MCF 10A (cell line): ENCODE measurements at regions of chr16 and their contacts with region 1.

Region 1: DNA sequence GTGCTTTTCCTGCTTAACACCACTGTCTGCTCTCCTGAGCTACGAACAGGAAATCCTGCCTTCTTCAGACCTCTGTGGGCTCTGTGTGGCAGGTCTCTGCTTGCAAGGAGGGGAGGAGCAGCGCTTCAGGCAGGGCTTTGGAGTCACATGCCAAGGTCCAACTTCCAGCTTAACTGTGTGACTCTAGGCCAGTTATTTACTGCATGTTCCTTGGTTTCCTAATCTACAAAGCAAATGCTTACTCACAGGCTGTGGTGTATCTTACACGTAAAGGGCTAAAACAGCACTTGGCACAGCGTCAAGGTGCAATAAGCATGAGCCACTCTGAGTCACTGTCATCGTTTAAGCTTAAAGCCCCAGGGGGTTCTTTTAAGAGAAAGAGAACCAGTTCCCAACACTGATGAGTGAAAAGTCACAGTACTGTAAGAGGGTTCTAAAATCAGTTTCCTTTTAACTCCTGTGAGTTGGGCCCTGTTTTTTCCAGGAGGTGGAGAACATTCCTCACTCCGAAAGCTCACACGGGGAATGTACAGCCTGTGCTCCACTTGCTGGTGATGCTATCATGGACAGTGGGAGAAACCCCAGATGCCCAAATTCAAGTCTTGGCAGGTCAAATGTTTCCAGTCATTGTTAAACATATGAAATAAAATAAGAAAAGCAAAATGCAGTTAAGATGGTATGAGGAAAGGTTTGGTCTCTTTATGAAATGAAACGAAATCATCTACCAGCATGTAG is 54.1 kb upstream of the BCAR1 start:
- DNase-seq: peak; percentile 100
- H3K4me3 Mint-ChIP-seq: peak overlapping the region; percentile 65
- H3K27ac Mint-ChIP-seq: peak overlapping the region; percentile 99
- H3K4me1 Mint-ChIP-seq: peaks cover 45% of the 10 kb centered on the region
- H3K27me3 Mint-ChIP-seq: no peaks in the 10 kb centered on the region
- CTCF ChIP-seq: no peak

Region 2: DNA sequence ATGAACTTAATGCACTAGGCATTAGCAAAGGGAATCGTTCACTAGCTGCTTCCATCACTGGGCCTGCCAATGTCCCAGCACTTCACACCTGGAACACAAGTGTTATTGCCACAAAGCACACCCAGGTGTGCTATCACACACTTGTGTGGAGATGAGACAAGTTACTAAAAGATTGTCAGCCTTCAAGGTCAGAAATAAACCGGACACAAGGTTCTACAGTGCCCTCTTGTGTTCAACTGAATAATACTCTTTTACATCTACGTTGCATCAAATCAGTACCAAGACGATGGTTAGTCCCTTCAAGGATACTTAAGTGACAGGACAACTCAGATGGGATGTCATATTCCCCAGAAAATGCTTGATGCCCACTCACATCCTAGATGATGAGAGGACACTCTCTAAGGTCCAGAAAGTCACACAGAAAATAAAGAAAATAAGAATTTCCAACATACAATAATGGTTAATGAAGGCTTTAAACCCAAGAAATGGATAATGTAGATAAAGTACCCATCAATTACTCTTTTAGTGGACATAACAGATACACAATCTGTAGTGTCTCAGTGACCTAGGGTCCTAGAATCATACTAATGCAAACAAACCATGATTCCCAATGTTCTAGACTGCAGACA is 682.2 kb before region 1 on chr16:
- CTCF ChIA-PET with region 1: no interaction called
- POLR2A ChIA-PET with region 1: no interaction called
- intact Hi-C with region 1: no loop called
- DNase-seq: peak; percentile 60
- H3K4me3 Mint-ChIP-seq: no peak overlapping the region
- H3K27ac Mint-ChIP-seq: no peak overlapping the region
- H3K4me1 Mint-ChIP-seq: peaks cover 4% of the 10 kb centered on the region
- H3K27me3 Mint-ChIP-seq: no peaks in the 10 kb centered on the region
- CTCF ChIP-seq: peak; percentile 65

Region 3: GRCh38 chr16:75096663-75097119 is 208.8 kb before region 1 on chr16:
- CTCF ChIA-PET with region 1: no interaction called
- POLR2A ChIA-PET with region 1: no interaction called
- intact Hi-C with region 1: no loop called
- DNase-seq: no peak
- H3K4me3 Mint-ChIP-seq: no peak overlapping the region
- H3K27ac Mint-ChIP-seq: no peak overlapping the region
- H3K4me1 Mint-ChIP-seq: no peaks in the 10 kb centered on the region
- H3K27me3 Mint-ChIP-seq: no peaks in the 10 kb centered on the region
- CTCF ChIP-seq: peak; percentile 17

Region 4: DNA sequence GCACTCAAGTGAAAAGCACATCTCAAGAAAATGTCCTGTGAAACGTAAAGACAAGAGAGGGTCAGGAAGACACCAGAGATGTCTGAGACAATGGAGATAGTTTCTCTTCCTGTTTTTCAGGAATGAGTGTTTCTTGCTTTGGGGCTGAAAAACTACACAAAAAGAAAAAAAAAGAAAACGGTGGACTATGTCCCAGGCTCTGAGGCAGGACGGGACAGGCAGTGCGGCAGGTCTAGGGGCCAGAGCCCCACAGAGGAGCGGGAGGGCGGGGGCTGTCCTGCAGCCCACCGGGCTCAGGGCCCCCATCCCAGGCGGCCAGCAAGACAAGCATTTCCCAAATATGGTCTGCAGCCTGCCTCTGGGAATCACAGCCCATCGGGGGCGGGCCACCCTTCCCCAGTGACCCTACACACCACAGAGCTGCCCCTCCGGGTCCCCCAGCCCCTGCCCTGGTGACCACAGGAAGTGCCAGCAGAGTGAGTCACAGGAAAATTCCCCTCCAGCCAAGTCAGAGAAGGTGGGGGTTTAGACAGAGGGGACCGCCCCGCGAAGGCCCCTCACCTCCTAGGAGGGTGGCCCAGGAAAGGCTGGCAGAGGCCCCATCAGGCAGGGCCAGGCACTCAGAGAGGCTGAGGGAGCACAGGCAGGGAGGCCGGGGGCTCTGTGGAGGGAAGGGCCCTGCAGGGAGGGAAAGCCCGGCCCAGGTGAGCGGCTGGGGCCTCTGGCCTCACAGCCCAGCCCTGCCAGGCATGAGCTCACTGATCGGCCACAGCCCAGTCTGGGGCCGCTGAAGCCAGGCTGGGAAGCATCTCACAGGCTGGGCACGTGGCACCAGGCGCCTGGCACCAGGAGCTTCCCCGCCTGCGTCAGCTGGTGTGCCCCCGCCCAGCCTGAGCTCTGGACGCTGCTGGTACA is 60.4 kb before region 1 on chr16:
- CTCF ChIA-PET with region 1: interaction called, 10 read pairs
- POLR2A ChIA-PET with region 1: interaction called, 106 read pairs
- intact Hi-C with region 1: loop called (anchors 1 kb)
- DNase-seq: peak; percentile 87
- H3K4me3 Mint-ChIP-seq: peak overlapping the region; percentile 45
- H3K27ac Mint-ChIP-seq: peak overlapping the region; percentile 96
- H3K4me1 Mint-ChIP-seq: peaks cover 37% of the 10 kb centered on the region
- H3K27me3 Mint-ChIP-seq: no peaks in the 10 kb centered on the region
- CTCF ChIP-seq: no peak

Region 5: GRCh38 chr16:75279305-75279704 is 26.2 kb before region 1 on chr16:
- CTCF ChIA-PET with region 1: interaction called, 3 read pairs
- POLR2A ChIA-PET with region 1: interaction called, 37 read pairs
- intact Hi-C with region 1: no loop called
- DNase-seq: peak; percentile 38
- H3K4me3 Mint-ChIP-seq: peak overlapping the region; percentile 13
- H3K27ac Mint-ChIP-seq: peak overlapping the region; percentile 11
- H3K4me1 Mint-ChIP-seq: peaks cover 6% of the 10 kb centered on the region
- H3K27me3 Mint-ChIP-seq: no peaks in the 10 kb centered on the region
- CTCF ChIP-seq: no peak

Region 6: GRCh38 chr16:75319513-75320411 is 14.2 kb after region 1 on chr16:
- CTCF ChIA-PET with region 1: interaction called, 4 read pairs
- POLR2A ChIA-PET with region 1: interaction called, 32 read pairs
- intact Hi-C with region 1: no loop called
- DNase-seq: peak; percentile 29
- H3K4me3 Mint-ChIP-seq: no peak overlapping the region
- H3K27ac Mint-ChIP-seq: no peak overlapping the region
- H3K4me1 Mint-ChIP-seq: peaks cover 26% of the 10 kb centered on the region
- H3K27me3 Mint-ChIP-seq: no peaks in the 10 kb centered on the region
- CTCF ChIP-seq: no peak

Region 7: DNA sequence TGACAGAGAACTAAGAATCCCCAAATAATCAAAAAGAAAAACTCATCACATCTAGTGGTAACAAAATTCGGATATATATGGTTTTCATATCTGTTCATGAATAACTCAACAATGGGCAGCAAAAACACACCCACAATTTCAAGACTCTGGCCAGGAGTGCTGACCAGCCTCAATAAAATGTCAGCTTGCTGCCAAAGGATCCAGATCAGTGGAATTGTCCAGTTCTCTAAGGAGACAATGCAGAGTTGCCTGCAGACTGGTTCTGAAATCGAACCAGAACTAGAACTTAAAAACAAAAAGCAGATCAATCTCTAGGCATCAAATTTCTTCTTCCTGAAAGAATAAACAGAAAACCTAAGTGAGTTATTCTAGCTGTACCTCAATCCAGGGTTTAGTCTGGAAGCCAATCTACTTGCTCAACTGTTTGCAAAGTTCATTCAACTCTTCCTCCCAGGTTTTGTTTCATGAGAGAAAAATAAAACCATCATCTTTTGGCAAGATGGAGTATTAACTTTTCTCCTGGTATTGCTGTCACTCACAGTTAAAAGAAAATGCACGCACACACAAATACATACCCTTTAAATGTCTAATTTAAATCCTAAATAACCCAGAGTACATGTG is 66.8 kb after region 1 on chr16:
- CTCF ChIA-PET with region 1: interaction called, 29 read pairs
- POLR2A ChIA-PET with region 1: interaction called, 103 read pairs
- intact Hi-C with region 1: no loop called
- DNase-seq: no peak
- H3K4me3 Mint-ChIP-seq: no peak overlapping the region
- H3K27ac Mint-ChIP-seq: peak overlapping the region; percentile 9
- H3K4me1 Mint-ChIP-seq: peaks cover 16% of the 10 kb centered on the region
- H3K27me3 Mint-ChIP-seq: no peaks in the 10 kb centered on the region
- CTCF ChIP-seq: no peak

Region 8: DNA sequence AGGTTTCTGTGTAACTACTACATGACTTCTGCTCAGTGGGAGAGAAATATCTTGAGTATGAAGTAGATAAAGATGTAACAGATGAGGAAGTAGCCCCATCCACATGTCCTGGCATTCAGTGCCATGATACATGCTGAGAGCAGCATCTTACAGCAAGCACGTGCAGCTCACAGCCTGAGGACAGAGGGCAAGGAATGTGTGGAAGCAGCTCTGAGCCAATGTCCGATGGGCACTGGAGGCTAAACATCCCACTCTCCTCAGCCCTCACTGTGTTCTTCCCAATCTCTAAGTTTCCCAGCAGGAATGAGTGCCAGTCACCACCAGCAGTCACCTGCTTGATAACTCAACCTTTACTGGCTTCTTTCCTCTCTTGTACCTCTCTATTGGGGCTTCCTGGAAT is 87.4 kb after region 1 on chr16:
- CTCF ChIA-PET with region 1: interaction called, 11 read pairs
- POLR2A ChIA-PET with region 1: interaction called, 19 read pairs
- intact Hi-C with region 1: no loop called
- DNase-seq: no peak
- H3K4me3 Mint-ChIP-seq: no peak overlapping the region
- H3K27ac Mint-ChIP-seq: no peak overlapping the region
- H3K4me1 Mint-ChIP-seq: peaks cover 6% of the 10 kb centered on the region
- H3K27me3 Mint-ChIP-seq: no peaks in the 10 kb centered on the region
- CTCF ChIP-seq: no peak

Region 9: GRCh38 chr16:76381096-76381495 is 1075.6 kb after region 1 on chr16:
- CTCF ChIA-PET with region 1: no interaction called
- POLR2A ChIA-PET with region 1: no interaction called
- intact Hi-C with region 1: no loop called
- DNase-seq: no peak
- H3K4me3 Mint-ChIP-seq: no peak overlapping the region
- H3K27ac Mint-ChIP-seq: no peak overlapping the region
- H3K4me1 Mint-ChIP-seq: no peaks in the 10 kb centered on the region
- H3K27me3 Mint-ChIP-seq: no peaks in the 10 kb centered on the region
- CTCF ChIP-seq: no peak